Tibial artery (tissue), 4 donors: ENCODE measurements at regions of chr11 and their contacts with region 1.

Region 1: GRCh38 chr11:124970925-124971324 is 16.9 kb downstream of the CCDC15 start:
- DNase-seq: no peak
- H3K4me3 ChIP-seq: no peak overlapping the region
- H3K27ac ChIP-seq: no peak overlapping the region
- H3K4me1 ChIP-seq: no peaks in the 10 kb centered on the region
- H3K27me3 ChIP-seq: no peaks in the 10 kb centered on the region
- CTCF ChIP-seq: no peak

Region 2: GRCh38 chr11:124801636-124802312 is 169.2 kb before region 1 on chr11:
- intact Hi-C with region 1: no loop called
- DNase-seq: no peak
- H3K4me3 ChIP-seq: no peak overlapping the region
- H3K27ac ChIP-seq: peak overlapping the region in 1 of 2 donors; percentile 99
- H3K4me1 ChIP-seq: peaks cover 0 to 32% (median 20%) of the 10 kb centered on the region in 4 donors
- H3K27me3 ChIP-seq: no peaks in the 10 kb centered on the region
- CTCF ChIP-seq: no peak

Region 3: DNA sequence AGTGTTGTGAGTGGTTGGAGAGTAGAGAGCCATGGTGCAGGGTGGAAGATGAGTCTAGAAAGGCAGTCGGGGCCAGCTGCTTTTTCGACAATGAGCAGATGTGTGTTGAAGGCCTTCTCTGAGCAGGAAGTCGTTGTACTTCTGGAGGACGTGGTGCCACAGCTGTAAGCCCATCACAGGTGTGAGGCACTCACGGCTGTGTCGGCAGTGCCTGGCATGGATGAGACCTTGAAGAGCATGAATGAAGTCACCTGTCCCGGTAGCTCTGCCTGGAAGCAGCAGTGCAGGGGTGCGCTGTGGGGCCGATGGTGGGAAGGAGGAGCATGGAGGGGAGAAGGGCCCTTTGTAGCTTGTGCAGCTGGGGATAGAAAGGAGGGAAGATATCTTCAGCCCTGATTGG is 358.9 kb after region 1 on chr11:
- intact Hi-C with region 1: loop called (anchors 10 kb)
- DNase-seq: peak in 1 of 2 donors; percentile 29
- H3K4me3 ChIP-seq: no peak overlapping the region
- H3K27ac ChIP-seq: no peak overlapping the region
- H3K4me1 ChIP-seq: no peaks in the 10 kb centered on the region
- H3K27me3 ChIP-seq: no peaks in the 10 kb centered on the region
- CTCF ChIP-seq: no peak

Region 4: DNA sequence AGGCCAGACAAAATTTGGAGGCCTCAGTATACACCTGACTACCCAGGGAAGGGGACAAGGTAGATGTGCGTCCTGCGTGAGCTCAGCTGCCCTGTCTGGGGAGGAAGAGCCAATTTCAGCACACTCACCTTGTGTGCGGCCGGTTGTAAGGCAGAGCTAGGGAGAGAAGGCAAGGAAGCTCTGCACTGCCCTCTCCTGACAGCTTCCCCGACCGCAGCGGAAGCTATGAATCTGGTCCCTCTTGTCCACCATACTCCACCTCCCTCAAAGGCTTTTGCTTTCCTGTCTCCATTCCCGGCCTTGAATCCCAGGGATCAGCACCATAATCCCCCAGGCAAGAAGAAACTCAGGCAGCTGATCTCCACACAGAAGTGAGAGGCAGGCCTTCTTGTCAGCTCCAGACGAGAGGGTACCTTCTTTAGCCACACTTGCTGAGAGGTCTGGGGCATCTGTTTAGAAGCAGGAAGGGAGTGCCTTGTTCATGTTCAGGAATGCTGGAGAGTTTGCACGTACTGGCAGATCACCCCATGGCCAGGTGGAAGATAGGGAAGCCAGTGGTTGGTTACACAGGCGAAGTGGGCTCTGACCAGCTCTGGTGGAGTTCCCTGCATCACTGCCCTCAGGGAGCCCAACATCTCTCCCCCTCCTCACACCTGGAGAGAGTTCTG is 462.7 kb after region 1 on chr11:
- intact Hi-C with region 1: loop called (anchors 10 kb)
- DNase-seq: peak in 1 of 2 donors; percentile 61
- H3K4me3 ChIP-seq: no peak overlapping the region
- H3K27ac ChIP-seq: no peak overlapping the region
- H3K4me1 ChIP-seq: no peaks in the 10 kb centered on the region
- H3K27me3 ChIP-seq: no peaks in the 10 kb centered on the region
- CTCF ChIP-seq: peak in 1 of 2 experiments; percentile 20

Region 5: GRCh38 chr11:126607374-126607773 is 1636.4 kb after region 1 on chr11:
- intact Hi-C with region 1: no loop called
- DNase-seq: peak in 1 of 2 donors; percentile 29
- H3K4me3 ChIP-seq: no peak overlapping the region
- H3K27ac ChIP-seq: no peak overlapping the region
- H3K4me1 ChIP-seq: no peaks in the 10 kb centered on the region
- H3K27me3 ChIP-seq: peaks cover 0 to 58% of the 10 kb centered on the region in 2 donors
- CTCF ChIP-seq: no peak